Activated T-helper 1 cell treated with anti-CD3 and anti-CD28 coated beads, Interleukin-12 subunit alpha, Interleukin-12 subunit beta, Interleukin-2, Interleukin-4 antibody, amounts not matched to agents 30 ng/mL and 10 ng/mL and 1 ng/mL, durations not matched to agents 14 hours and 24 hours and 36 hours (primary cell): ENCODE measurements at regions of chr12 and their contacts with region 1.

Region 1: DNA sequence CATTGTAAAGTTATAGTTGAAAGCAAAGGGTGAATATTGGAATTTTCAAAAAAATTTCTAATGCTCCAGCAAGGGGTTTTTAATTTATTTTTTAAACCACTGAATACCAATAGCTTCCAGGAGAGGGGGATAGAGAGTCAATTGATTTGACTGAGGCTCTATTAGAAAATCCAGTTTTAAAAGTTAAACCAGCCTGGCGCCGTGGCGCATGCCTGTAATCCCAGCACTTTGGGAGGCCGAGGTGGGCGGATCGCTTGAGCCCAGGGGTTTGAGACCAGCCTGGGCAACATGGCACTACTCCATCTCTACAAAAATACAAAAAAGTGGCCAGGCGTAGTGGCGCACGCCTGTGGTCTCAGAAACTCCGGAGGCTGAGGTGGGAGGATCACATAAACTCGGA is 150.1 kb downstream of the SLC38A4 start:
- DNase-seq: no peak
- H3K4me3 Mint-ChIP-seq: no peak overlapping the region
- H3K27ac Mint-ChIP-seq: no peak overlapping the region
- H3K4me1 Mint-ChIP-seq: peaks cover 7% of the 10 kb centered on the region
- H3K27me3 Mint-ChIP-seq: peaks cover 3% of the 10 kb centered on the region

Region 2: DNA sequence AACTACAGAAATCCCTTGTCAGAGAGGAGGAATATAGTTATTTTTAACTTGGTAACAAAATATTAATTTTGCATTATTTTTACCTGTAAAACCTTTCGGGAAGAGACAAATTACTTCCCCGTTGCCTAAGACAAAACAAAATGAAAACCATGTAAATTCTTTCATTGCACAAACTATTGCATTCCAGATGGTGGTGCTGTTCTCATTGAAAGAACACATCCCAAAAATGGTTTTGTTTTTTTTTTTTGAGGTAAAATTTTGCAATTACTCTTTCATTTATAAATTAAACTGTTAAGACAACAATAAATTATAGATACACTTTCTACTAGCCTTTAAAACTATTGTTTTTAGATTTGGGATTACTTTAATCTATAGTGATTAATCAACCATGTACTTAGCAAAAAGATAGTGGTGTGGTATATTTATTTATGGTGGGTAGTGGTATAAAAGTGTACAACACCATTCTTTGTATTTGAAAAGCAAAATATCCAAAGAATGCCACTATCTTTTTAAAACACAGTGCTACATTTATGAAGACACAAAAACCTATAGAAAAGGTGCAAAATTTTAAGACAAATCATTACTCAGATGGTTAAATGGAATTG is 522.4 kb before region 1 on chr12:
- intact Hi-C with region 1: loop called (anchors 5 kb)
- DNase-seq: no peak
- H3K4me3 Mint-ChIP-seq: no peak overlapping the region
- H3K27ac Mint-ChIP-seq: no peak overlapping the region
- H3K4me1 Mint-ChIP-seq: no peaks in the 10 kb centered on the region
- H3K27me3 Mint-ChIP-seq: peaks cover 6% of the 10 kb centered on the region

Region 3: DNA sequence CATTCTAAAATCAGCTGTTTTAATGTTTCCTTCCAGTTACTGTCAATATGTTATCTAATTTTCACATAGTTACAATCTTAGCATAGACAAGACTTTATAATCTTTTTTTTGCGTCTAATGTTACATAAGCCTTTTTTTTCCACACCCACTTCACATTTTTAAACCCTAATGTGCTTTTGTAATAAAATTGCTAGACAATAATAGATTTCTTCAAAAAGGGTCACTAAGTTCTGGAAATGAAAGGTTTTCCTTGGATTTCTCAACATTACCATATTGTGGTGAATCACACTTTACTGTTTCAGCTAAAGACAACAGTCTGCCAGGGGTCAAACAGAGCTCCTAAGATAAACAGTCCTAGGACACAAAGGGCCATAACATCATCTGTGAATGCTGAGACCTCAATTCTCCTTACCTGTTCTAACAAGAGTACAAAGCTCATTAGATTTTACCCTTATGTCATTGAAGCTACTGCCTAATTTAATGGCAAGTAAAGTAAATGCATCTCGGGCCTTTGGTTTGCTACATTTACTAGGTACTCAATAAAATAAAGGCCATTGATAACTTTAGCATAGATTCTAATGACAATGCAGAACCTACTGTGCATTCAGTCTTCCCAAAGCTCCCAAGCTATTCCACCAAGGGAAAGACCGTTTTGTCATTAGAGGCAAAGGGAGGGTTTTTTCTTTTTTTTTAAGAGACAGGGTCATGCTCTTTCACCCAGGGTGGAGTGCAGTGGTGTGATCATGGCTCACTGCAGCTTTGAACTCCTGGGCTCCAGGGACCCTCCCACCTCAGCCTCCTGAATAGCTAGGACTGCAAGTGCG is 192.0 kb before region 1 on chr12:
- intact Hi-C with region 1: no loop called
- DNase-seq: no peak
- H3K4me3 Mint-ChIP-seq: no peak overlapping the region
- H3K27ac Mint-ChIP-seq: no peak overlapping the region
- H3K4me1 Mint-ChIP-seq: no peaks in the 10 kb centered on the region
- H3K27me3 Mint-ChIP-seq: no peaks in the 10 kb centered on the region

Region 4: GRCh38 chr12:46933947-46934346 is 258.2 kb after region 1 on chr12:
- intact Hi-C with region 1: loop called (anchors 5 kb)
- DNase-seq: no peak
- H3K4me3 Mint-ChIP-seq: no peak overlapping the region
- H3K27ac Mint-ChIP-seq: no peak overlapping the region
- H3K4me1 Mint-ChIP-seq: no peaks in the 10 kb centered on the region
- H3K27me3 Mint-ChIP-seq: peaks cover 25% of the 10 kb centered on the region